Mucosa of descending colon (tissue), 3 donors: ENCODE measurements at regions of chr9 and their contacts with region 1.

Region 1: DNA sequence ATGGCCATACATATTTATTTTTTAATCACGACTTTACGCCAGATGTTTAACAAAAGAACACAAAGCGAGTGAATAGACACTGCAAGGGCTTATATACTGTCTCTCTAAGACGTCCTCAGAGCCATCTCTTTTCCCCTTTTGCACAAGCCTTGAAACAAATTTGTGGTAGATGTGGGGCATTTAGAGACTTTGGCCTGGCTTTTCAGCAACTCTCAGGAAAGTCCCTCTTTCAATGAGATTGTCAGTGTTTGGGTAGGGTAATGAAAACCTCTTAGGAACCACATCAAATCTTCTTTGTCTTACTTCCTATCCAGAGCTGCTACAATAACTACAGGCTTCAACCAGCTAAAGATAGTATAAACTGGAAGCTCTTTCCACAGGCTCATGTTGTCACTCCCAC is 380.0 kb downstream of the ANXA1 start:
- DNase-seq: no peak
- ATAC-seq: no peak
- H3K4me3 ChIP-seq: no peak overlapping the region
- H3K4me1 ChIP-seq: no peaks in the 10 kb centered on the region
- CTCF ChIP-seq: no peak

Region 2: DNA sequence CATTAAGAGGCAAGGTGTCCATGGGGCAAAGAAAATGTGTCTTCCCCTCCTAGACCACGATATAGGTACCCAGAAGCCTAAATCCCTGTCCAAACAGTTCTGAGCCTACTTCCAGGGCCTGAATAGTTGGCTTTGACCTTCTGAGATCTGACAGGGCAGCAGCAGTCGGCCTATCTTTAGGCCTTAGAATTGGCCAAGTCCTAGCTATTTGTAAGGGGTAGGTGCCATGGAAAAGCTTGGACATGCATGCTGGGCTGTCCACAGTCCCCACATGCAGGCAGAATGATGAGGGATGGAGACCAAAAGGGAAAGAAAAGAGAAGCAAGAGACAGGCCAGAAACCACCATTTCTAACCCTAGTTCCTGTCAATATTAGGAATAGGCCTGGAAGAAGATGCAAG is 33.9 kb before region 1 on chr9:
- intact Hi-C with region 1: loop called in 1 of 2 experiments (anchors 2 kb)
- DNase-seq: no peak
- ATAC-seq: no peak
- H3K4me3 ChIP-seq: no peak overlapping the region
- H3K4me1 ChIP-seq: no peaks in the 10 kb centered on the region
- CTCF ChIP-seq: no peak

Region 3: DNA sequence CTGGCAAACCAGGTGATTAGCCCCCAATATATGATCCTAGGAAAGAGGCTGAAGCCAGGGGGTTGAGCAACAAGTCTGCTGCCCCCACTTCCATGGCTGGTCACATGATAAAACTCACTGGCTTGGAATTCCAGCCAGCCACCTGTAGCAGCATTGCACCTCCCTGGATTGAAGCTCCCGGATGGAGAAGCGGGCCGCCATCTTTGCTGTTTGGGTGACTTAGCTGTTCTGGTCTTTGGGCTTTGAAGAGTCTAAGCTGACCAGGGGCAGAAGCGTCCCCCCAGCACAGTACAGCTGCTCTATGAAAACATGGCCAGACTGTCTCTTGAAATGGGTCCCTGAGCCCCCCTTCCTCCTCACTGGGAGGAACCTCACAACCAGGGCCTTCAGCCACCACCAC is 230.2 kb after region 1 on chr9:
- intact Hi-C with region 1: no loop called
- DNase-seq: no peak
- ATAC-seq: no peak
- H3K4me3 ChIP-seq: no peak overlapping the region
- H3K4me1 ChIP-seq: no peaks in the 10 kb centered on the region
- CTCF ChIP-seq: no peak